Gastrocnemius medialis (tissue), 4 donors: ENCODE measurements at regions of chr13 and their contacts with region 1.

Region 1: DNA sequence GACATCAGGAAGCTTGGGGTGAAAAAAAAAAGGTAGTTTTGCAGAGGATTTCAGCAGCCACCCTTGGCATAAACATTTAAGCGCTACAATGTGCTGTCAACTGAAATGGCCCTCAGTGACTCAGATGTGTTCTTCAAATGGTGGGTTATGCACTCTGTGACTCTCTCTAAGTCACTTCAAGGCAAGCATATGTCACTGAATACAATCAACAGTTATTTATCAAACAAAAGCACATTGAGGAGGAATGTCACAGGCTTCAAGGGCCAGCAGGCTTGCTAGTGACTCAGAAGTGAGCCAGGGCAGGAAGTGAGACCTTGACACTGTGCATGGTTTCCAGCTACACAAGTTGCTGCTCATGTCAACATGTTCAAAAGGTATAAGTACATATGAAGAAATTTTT is 523.7 kb upstream of the HTR2A start:
- DNase-seq: no peak
- ATAC-seq: no peak
- H3K4me3 ChIP-seq: no peak overlapping the region
- H3K27ac ChIP-seq: no peak overlapping the region
- H3K4me1 ChIP-seq: no peaks in the 10 kb centered on the region
- H3K27me3 ChIP-seq: no peaks in the 10 kb centered on the region
- CTCF ChIP-seq: no peak
- POLR2A ChIP-seq: no peak

Region 2: DNA sequence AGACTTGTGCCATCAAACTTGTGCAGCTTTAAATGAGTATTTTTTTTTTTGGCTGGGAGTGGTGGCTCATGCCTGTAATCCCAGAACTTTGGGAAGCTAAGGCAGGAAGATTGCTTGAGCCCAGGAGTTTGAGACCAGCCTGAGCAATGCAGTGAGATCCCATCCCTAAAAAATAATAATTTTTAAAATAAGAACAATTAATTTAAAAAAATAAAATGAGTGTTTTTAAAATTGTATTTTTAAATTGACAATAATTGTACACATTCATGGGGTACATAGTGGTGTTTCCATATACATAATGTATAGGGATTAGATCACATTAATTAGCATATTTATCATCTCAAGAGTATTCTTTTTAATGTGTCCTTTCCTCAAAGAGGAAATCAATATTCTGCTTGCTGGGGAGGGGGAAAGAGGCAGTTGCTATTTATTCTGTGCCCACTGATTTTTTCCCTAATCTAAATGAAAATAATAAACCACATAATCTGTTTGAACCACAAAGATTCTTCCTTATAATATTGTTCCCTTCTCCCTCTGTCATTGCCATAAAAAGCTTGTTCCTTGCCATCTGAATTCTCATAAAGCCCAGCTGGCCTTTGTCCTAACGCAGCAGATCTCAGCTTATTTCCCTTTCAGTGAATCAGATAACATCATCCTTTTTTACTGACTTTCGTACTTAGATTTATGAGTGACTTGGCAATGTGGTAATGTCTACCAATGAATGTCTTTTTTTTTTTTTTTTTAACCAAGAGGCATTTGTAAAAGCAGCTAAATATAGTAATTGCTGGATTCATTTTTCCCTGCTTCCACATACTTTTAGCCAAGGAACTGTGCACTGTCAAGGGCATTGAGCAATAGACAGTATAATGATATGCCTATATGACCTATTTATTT is 951.8 kb before region 1 on chr13:
- in situ Hi-C with region 1: no loop called
- intact Hi-C with region 1: no loop called
- DNase-seq: no peak
- ATAC-seq: no peak
- H3K4me3 ChIP-seq: no peak overlapping the region
- H3K27ac ChIP-seq: no peak overlapping the region
- H3K4me1 ChIP-seq: no peaks in the 10 kb centered on the region
- H3K27me3 ChIP-seq: no peaks in the 10 kb centered on the region
- CTCF ChIP-seq: no peak
- POLR2A ChIP-seq: no peak

Region 3: GRCh38 chr13:47598340-47598911 is 177.9 kb after region 1 on chr13:
- in situ Hi-C with region 1: no loop called
- intact Hi-C with region 1: loop called (anchors 5 kb)
- DNase-seq: no peak
- ATAC-seq: no peak
- H3K4me3 ChIP-seq: no peak overlapping the region
- H3K27ac ChIP-seq: no peak overlapping the region
- H3K4me1 ChIP-seq: no peaks in the 10 kb centered on the region
- H3K27me3 ChIP-seq: no peaks in the 10 kb centered on the region
- CTCF ChIP-seq: no peak
- POLR2A ChIP-seq: no peak

Region 4: DNA sequence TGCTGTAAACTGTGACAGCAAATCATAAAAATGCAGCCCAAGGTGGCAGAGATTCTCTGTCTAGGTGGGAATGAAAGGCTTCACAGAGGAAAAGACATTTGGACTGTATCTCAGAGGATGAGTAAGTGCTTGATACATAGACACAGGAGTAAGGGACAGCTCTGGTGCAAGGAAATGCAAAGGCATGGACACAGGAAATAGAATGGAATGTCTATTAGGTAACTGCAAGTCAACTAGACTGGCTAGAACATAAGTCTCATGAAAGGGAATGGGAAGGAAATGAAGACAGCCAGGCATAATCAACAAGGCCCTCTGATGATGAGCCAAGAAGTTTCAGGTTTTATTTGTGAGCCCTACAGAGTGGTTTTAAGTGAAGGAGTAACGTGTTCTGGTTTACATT is 258.8 kb after region 1 on chr13:
- in situ Hi-C with region 1: no loop called
- intact Hi-C with region 1: loop called (anchors 5 kb)
- DNase-seq: no peak
- ATAC-seq: no peak
- H3K4me3 ChIP-seq: no peak overlapping the region
- H3K27ac ChIP-seq: no peak overlapping the region
- H3K4me1 ChIP-seq: no peaks in the 10 kb centered on the region
- H3K27me3 ChIP-seq: no peaks in the 10 kb centered on the region
- CTCF ChIP-seq: no peak
- POLR2A ChIP-seq: no peak

Region 5: GRCh38 chr13:48029859-48030258 is 609.3 kb after region 1 on chr13:
- in situ Hi-C with region 1: no loop called
- intact Hi-C with region 1: no loop called
- DNase-seq: no peak
- ATAC-seq: no peak
- H3K4me3 ChIP-seq: no peak overlapping the region
- H3K27ac ChIP-seq: no peak overlapping the region
- H3K4me1 ChIP-seq: no peaks in the 10 kb centered on the region
- H3K27me3 ChIP-seq: no peaks in the 10 kb centered on the region
- CTCF ChIP-seq: no peak
- POLR2A ChIP-seq: no peak